ENCODE measurements at regions of chr10 and their contacts with region 1.

Region 1: DNA sequence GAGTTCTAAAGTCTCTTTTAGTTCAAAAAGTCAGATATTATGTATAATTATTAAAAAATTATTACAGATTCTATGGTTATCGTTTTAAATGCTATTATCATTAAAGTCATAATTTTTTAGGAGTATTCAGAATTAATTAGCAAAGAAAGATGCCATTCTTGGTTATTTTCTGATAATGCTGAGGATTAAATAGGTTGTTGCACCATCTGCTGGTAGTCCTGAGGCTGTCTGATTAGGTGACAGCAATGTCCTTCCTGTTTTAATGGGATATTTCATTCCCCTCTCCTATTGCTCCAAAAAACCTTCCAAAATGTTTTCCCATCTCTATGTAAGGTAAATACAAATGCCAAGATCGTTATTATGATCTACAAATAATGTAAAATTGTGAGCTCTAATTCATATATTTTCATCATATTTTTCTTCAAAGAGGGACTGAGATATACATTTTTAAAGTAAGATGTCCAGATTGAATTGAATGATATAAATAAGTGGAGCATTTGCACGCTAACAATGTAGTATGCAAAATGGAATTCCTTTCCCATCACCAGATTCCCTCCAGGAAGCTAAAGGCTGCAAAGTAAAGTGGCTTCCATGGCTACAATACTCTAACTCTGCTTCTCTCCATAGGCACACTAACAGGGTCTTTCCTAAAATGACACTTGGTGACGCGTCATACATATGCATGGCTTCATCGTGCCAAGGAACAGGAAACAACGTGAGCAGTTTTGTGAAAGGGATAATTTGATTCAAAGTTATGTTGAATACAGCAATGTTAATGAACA is 58.8 kb upstream of the AKR1E2 start:
- DNase-seq: no peak
- ATAC-seq: peak; percentile 81

Region 2: GRCh38 chr10:2927958-2928840 is 1839.0 kb before region 1 on chr10:
- intact Hi-C with region 1: loop called (anchors 10 kb)
- DNase-seq: peak; percentile 53
- ATAC-seq: peak; percentile 83

Region 3: DNA sequence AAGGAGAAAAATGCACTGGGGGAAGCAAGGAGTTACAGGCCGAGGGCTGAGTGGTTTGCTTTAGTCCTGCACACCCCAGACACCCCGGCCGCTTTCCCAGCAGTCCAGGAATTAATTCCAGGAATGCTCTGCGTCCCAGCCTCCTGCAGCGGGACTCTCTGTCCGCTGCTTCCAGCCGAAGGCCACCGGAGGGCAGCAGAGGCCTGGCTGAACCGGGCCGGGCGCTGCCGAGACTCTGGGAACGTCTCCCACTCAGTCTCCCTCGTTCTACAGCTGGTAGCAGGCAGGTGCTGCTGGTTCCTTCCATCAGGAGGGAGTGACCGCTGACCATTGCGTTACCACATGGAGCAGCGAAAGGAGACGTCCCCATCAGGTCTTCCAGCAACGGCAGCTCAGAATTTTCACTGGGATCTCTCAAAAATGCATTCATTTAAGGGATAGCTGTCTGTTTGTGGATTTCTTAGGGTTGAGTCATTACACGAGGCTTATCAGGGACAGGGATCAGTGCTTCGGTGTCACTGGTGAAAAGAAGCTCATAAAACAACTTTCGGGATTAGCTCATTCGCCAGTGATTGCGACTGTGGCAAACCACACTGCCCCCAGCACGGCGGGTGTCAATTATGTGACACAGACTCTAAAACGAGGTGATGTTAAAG is 1569.7 kb before region 1 on chr10:
- intact Hi-C with region 1: loop called (anchors 5 kb)
- DNase-seq: peak; percentile 86
- ATAC-seq: peak; percentile 97

Region 4: GRCh38 chr10:3239066-3239919 is 1527.9 kb before region 1 on chr10:
- intact Hi-C with region 1: loop called (anchors 10 kb)
- DNase-seq: peak; percentile 84
- ATAC-seq: peak; percentile 92

Region 5: DNA sequence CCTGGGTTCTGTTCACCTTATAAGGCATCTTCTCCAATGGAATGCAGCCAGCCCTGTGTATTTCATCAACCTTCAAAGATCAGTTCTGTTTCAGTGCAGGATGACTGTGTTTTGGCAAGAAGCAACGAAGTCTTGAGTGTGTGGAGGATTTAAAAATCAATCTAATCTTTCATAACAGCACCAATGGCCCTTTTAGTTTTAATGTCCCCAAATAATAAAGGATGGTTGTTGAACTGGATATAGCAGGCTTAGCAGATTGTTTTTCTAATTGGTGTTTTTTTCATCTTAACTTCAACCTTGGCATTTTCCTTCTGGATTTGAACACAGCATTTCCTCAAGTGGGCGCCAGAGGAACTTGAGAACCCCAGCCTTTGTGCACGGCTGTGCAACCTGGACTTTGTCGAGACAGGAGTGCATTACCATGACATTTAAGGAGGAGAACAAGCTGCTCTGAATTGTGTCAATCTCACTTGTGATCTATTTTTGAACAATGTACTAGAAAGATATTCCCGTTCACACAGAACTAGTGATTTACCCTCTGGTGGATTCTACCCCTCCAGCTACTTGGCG is 254.5 kb before region 1 on chr10:
- intact Hi-C with region 1: loop called (anchors 5 kb)
- DNase-seq: peak; percentile 68
- ATAC-seq: peak; percentile 81

Region 6: GRCh38 chr10:4670737-4671136 is 96.5 kb before region 1 on chr10:
- intact Hi-C with region 1: loop called (anchors 5 kb)
- DNase-seq: no peak
- ATAC-seq: no peak

Measured in Right ventricle myocardium superior (tissue), 1 donor.